K562 (cell line): ENCODE measurements at regions of chr22 and their contacts with region 1.

Region 1: GRCh38 chr22:38051900-38052862 is 5.0 kb upstream of the PICK1 start:
- DNase-seq: peak; percentile 78 to 83 (median 80)
- ATAC-seq: peak; percentile 91
- H3K4me3 ChIP-seq: no peak overlapping the region
- H3K27ac ChIP-seq: no peak overlapping the region
- H3K4me1 ChIP-seq: peaks cover 0 to 15% of the 10 kb centered on the region in 2 experiments; a peak in 2 of 5 replicates
- H3K27me3 ChIP-seq: peaks cover 0 to 20% of the 10 kb centered on the region in 2 experiments; a peak in 2 of 5 replicates
- CTCF ChIP-seq: peak; percentile 80 to 98 (median 91)
- EP300 ChIP-seq: no peak
- POLR2A ChIP-seq: no peak
- RAD21 ChIP-seq: peak; percentile 81 to 91

Region 2: GRCh38 chr22:38104084-38104483 is 51.9 kb after region 1 on chr22:
- CTCF ChIA-PET with region 1: interaction called, 4 read pairs
- POLR2A ChIA-PET with region 1: no interaction called
- in situ Hi-C with region 1: no loop called
- intact Hi-C with region 1: loop called (anchors 1 kb)
- DNase-seq: peak; percentile 43 to 50 (median 46)
- ATAC-seq: peak; percentile 86
- H3K4me3 ChIP-seq: no peak overlapping the region
- H3K27ac ChIP-seq: no peak overlapping the region
- H3K4me1 ChIP-seq: peaks cover 0 to 9% of the 10 kb centered on the region in 2 experiments; a peak in 4 of 5 replicates
- H3K27me3 ChIP-seq: no peaks in the 10 kb centered on the region
- CTCF ChIP-seq: peak; percentile 45 to 54 (median 48)
- EP300 ChIP-seq: no peak
- POLR2A ChIP-seq: no peak
- RAD21 ChIP-seq: peak in 1 of 2 experiments; percentile 40; a peak in 2 of 4 replicates

Region 3: GRCh38 chr22:38153821-38154562 is 101.8 kb after region 1 on chr22:
- CTCF ChIA-PET with region 1: interaction called, 3 read pairs
- POLR2A ChIA-PET with region 1: no interaction called
- in situ Hi-C with region 1: no loop called
- intact Hi-C with region 1: loop called (anchors 2 kb)
- DNase-seq: no peak
- ATAC-seq: 0 out of 3 replicates have a peak, but pooled peaks have one; percentile 27
- H3K4me3 ChIP-seq: no peak overlapping the region
- H3K27ac ChIP-seq: no peak overlapping the region
- H3K4me1 ChIP-seq: peaks cover 0 to 7% of the 10 kb centered on the region in 2 experiments; a peak in 4 of 5 replicates
- H3K27me3 ChIP-seq: no peaks in the 10 kb centered on the region
- CTCF ChIP-seq: peak in 2 of 3 experiments; percentile 25 to 42; a peak in 3 of 6 replicates
- EP300 ChIP-seq: no peak
- POLR2A ChIP-seq: no peak
- RAD21 ChIP-seq: peak; percentile 46 to 62

Region 4: GRCh38 chr22:38201710-38202436 is 149.7 kb after region 1 on chr22 and contains the start of gene MAFF:
- CTCF ChIA-PET with region 1: no interaction called
- POLR2A ChIA-PET with region 1: no interaction called
- in situ Hi-C with region 1: no loop called
- intact Hi-C with region 1: no loop called
- DNase-seq: peak; percentile 89 to 97 (median 93)
- ATAC-seq: peak; percentile 85
- H3K4me3 ChIP-seq: peak within 1 kb of the TSS; percentile 82
- H3K27ac ChIP-seq: peak within 1 kb of the TSS; percentile 95
- H3K4me1 ChIP-seq: peaks cover 4 to 22% of the 10 kb centered on the region in 2 experiments; a peak in 3 of 5 replicates
- H3K27me3 ChIP-seq: no peaks in the 10 kb centered on the region
- CTCF ChIP-seq: no peak
- EP300 ChIP-seq: no peak
- POLR2A ChIP-seq: peak; percentile 79
- RAD21 ChIP-seq: no peak
- polyA plus RNA-seq, gene MAFF: 0.51 to 0.60 TPM

Region 5: GRCh38 chr22:38353142-38353629 is 301.0 kb after region 1 on chr22:
- CTCF ChIA-PET with region 1: no interaction called
- POLR2A ChIA-PET with region 1: no interaction called
- in situ Hi-C with region 1: no loop called
- intact Hi-C with region 1: loop called (anchors 10 kb)
- DNase-seq: peak; percentile 72 to 84 (median 78)
- ATAC-seq: peak; percentile 91
- H3K4me3 ChIP-seq: no peak overlapping the region
- H3K27ac ChIP-seq: no peak overlapping the region
- H3K4me1 ChIP-seq: peaks cover 0 to 17% of the 10 kb centered on the region in 2 experiments; a peak in 3 of 5 replicates
- H3K27me3 ChIP-seq: no peaks in the 10 kb centered on the region; a peak in 1 of 5 replicates
- CTCF ChIP-seq: peak; percentile 76 to 90 (median 78)
- EP300 ChIP-seq: no peak
- POLR2A ChIP-seq: no peak
- RAD21 ChIP-seq: peak; percentile 72 to 80

Region 6: GRCh38 chr22:38569972-38570778 is 518.0 kb after region 1 on chr22 and contains the start of gene DMC1:
- CTCF ChIA-PET with region 1: interaction called, 4 read pairs
- POLR2A ChIA-PET with region 1: no interaction called
- in situ Hi-C with region 1: loop called (anchors 25 kb)
- intact Hi-C with region 1: loop called (anchors 5 kb)
- DNase-seq: peak; percentile 94 to 99 (median 98)
- ATAC-seq: peak; percentile 94
- H3K4me3 ChIP-seq: peak within 1 kb of the TSS; percentile 51
- H3K27ac ChIP-seq: peak within 1 kb of the TSS; percentile 94
- H3K4me1 ChIP-seq: peaks cover 4 to 8% of the 10 kb centered on the region in 2 experiments; a peak in 4 of 5 replicates
- H3K27me3 ChIP-seq: no peaks in the 10 kb centered on the region
- CTCF ChIP-seq: no peak
- EP300 ChIP-seq: no peak
- POLR2A ChIP-seq: peak; percentile 81
- RAD21 ChIP-seq: no peak
- polyA plus RNA-seq, gene DMC1: 8.4 to 8.7 TPM

Region 7: GRCh38 chr22:38578505-38578904 is 526.3 kb after region 1 on chr22:
- CTCF ChIA-PET with region 1: no interaction called
- POLR2A ChIA-PET with region 1: interaction called, 3 read pairs
- in situ Hi-C with region 1: loop called (anchors 25 kb)
- intact Hi-C with region 1: loop called (anchors 5 kb)
- DNase-seq: no peak
- ATAC-seq: no peak
- H3K4me3 ChIP-seq: no peak overlapping the region
- H3K27ac ChIP-seq: no peak overlapping the region
- H3K4me1 ChIP-seq: no peaks in the 10 kb centered on the region; a peak in 1 of 5 replicates
- H3K27me3 ChIP-seq: no peaks in the 10 kb centered on the region
- CTCF ChIP-seq: no peak
- EP300 ChIP-seq: no peak
- POLR2A ChIP-seq: no peak
- RAD21 ChIP-seq: no peak

Region 8: GRCh38 chr22:39003165-39003638 is 951.0 kb after region 1 on chr22:
- CTCF ChIA-PET with region 1: no interaction called
- POLR2A ChIA-PET with region 1: no interaction called
- in situ Hi-C with region 1: loop called (anchors 25 kb)
- intact Hi-C with region 1: no loop called
- DNase-seq: peak; percentile 61 to 72 (median 64)
- ATAC-seq: peak; percentile 95
- H3K4me3 ChIP-seq: no peak overlapping the region
- H3K27ac ChIP-seq: no peak overlapping the region
- H3K4me1 ChIP-seq: no peaks in the 10 kb centered on the region; a peak in 1 of 5 replicates
- H3K27me3 ChIP-seq: peaks cover 0 to 9% of the 10 kb centered on the region in 2 experiments; a peak in 1 of 5 replicates
- CTCF ChIP-seq: peak; percentile 67 to 74 (median 70)
- EP300 ChIP-seq: no peak
- POLR2A ChIP-seq: no peak
- RAD21 ChIP-seq: peak; percentile 36 to 71